B cell (primary cell): ENCODE measurements at regions of chr10 and their contacts with region 1.

Region 1: DNA sequence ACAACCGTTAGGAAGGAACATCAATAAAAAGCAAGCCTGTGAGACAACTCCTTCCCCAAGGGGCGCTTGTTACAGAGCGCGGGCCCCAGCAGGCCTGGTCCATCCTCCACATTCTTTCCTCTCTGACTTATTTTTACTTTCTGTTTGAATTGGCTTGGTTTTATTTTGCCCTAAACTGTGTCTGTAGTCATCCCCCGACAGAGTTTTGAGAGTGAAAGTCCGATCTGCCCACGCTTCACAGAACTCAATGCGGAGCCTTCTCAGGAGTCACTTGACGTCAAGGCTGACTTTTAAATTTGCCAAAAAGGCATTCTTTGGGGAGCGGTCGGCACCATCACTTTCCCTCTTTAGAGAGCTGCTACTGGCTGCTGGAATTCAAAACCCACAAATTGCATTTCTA is 150.1 kb upstream of the KLF6 start:
- DNase-seq: peak; percentile 78
- ATAC-seq: peak; percentile 97
- H3K4me3 ChIP-seq: peak overlapping the region in 4 of 5 experiments; percentile 10 to 51 (median 40)
- H3K4me3 Mint-ChIP-seq: peak overlapping the region; percentile 72
- H3K27ac ChIP-seq: peak overlapping the region; percentile 68
- H3K27ac Mint-ChIP-seq: peak overlapping the region; percentile 87
- H3K4me1 ChIP-seq: peaks cover 13 to 21% of the 10 kb centered on the region in 2 donors
- H3K4me1 Mint-ChIP-seq: peaks cover 27% of the 10 kb centered on the region
- H3K27me3 ChIP-seq: no peaks in the 10 kb centered on the region
- H3K27me3 Mint-ChIP-seq: no peaks in the 10 kb centered on the region
- CTCF ChIP-seq: no peak

Region 2: DNA sequence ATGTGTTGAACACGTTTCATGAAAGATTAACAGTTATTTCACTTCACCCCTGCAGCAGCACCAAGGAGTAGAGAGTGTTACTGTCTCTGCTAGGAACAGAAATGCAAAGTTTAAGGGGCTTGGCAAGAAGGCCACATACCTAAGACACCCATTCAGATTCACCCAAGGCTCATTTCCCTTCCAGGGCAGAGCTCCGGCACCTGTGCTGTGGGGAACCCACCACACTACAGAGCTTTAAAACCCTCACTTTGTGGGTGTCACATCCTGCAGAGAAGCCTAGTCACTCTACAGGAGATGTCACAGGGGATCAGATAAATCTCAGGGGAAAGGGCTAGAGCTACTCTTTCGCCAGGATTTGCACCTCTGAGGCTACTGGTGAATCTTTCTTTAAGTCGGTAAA is 25.9 kb after region 1 on chr10:
- CTCF ChIA-PET with region 1: no interaction called
- POLR2A ChIA-PET with region 1: no interaction called
- intact Hi-C with region 1: no loop called
- DNase-seq: peak; percentile 45
- ATAC-seq: peak; percentile 75
- H3K4me3 ChIP-seq: no peak overlapping the region
- H3K4me3 Mint-ChIP-seq: peak overlapping the region; percentile 10
- H3K27ac ChIP-seq: peak overlapping the region in 1 of 2 donors; percentile 11
- H3K27ac Mint-ChIP-seq: peak overlapping the region; percentile 29
- H3K4me1 ChIP-seq: peaks cover 19% of the 10 kb centered on the region in 2 donors
- H3K4me1 Mint-ChIP-seq: peaks cover 24% of the 10 kb centered on the region
- H3K27me3 ChIP-seq: no peaks in the 10 kb centered on the region
- H3K27me3 Mint-ChIP-seq: peaks cover 5% of the 10 kb centered on the region
- CTCF ChIP-seq: no peak

Region 3: GRCh38 chr10:4333459-4333894 is 398.3 kb after region 1 on chr10:
- CTCF ChIA-PET with region 1: no interaction called
- POLR2A ChIA-PET with region 1: no interaction called
- intact Hi-C with region 1: loop called (anchors 1 kb)
- DNase-seq: no peak
- ATAC-seq: peak; percentile 46
- H3K4me3 ChIP-seq: no peak overlapping the region
- H3K4me3 Mint-ChIP-seq: no peak overlapping the region
- H3K27ac ChIP-seq: peak overlapping the region; percentile 84 to 96
- H3K27ac Mint-ChIP-seq: no peak overlapping the region
- H3K4me1 ChIP-seq: peaks cover 3% of the 10 kb centered on the region in 2 donors
- H3K4me1 Mint-ChIP-seq: no peaks in the 10 kb centered on the region
- H3K27me3 ChIP-seq: no peaks in the 10 kb centered on the region
- H3K27me3 Mint-ChIP-seq: no peaks in the 10 kb centered on the region
- CTCF ChIP-seq: peak; percentile 5